Posterior vena cava (tissue), 2 donors: ENCODE measurements at regions of chr2 and their contacts with region 1.

Region 1: DNA sequence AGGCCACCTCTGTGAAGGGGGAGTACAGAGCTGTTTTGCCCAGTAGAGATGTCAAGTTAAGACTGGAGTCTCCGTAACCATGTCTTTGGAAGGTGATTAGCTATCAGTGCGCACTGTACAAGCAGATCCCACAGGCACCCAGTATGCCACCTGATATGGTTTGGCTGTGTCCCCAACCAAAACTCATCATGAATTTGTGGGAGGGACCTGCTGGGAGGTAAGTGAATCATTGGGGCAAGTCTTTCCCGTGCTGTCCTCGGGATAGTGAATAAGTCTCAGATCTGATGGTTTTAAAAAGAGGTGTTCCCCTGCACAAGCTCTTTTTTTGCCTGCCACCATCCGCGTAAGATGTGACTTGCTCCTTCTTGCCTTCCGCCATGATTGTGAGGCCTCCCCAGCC is 90.2 kb downstream of the ACTR2 start:
- DNase-seq: peak; percentile 10

Region 2: DNA sequence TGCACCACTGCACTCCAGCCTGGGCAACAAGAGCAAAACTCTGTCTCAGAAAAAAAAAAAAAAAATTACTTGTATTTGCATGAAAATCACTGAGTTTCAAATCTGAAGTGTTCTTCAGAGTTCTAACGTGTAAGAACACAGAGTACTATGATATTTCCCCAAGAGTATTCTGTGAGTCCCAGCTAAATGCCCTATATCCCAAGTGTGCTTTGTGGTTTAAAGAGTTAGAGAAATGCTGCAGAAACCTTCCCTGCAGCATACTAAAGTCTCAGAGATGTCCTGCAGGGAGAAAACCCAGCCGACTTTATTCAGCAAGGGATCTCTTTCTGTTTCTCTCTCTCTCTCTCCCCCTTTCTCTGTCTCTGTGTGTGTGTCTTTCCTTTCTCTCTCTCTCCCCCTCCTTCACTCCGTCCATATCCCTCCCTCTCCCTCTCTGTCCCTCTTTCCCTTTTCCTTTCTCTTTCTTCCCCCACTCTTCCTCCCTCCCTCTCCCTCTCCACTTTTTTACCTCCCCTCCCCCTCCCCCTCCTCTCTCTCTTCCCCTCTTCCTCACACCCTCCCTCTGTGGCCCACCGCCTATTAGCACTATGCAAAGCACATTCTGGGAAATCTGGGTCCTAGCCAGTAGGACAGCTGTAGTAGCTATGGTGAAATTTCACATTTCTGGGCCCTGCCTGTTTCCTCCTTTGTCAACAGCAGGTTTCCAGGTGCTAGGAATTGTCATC is 36.1 kb before region 1 on chr2:
- intact Hi-C with region 1: loop called in 1 of 2 experiments (anchors 1 kb)
- DNase-seq: no peak